Right ventricle myocardium superior (tissue), 1 donor: ENCODE measurements at regions of chr17 and their contacts with region 1.

Region 1: DNA sequence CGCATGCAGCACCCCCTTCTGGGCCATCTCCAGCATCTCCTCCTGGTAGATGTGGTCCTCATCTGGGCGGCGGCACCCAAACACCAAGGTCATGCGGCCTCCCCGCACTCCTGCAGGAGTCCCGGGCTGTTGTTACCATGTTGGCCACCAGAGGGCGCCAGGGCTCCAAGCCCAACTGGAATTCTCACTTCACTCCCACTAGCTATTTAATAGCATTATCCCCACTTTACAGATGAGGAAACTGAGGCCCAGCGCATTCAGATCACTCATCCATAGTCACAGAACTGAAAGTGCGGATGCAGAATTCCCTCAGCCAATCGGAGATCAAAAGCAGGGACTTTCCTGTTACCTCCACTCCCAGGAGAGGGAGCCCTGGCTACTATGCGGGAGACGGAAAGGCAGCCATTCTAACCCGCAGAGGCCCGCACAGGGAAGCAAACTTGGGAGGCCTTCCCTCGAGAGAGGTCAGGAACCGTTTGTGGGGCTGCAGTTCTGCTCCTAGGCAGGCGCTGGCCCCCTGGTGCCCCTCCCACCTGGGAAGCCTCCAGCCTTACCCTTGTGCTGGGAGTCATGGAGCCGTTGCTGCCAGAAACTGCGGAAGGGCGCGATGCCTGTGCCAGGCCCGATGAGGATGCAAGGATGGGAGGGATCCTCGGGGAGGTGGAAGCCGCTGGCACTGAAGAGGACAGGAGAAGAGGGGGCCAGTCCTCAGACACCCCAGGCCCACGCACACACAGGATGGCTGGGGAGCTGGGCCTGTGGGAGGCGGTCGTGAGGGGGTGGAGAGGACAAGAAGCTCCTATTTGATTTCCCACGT is 40.1 kb downstream of the NOS2 start:
- DNase-seq: peak; percentile 84
- ATAC-seq: peak; percentile 65

Region 2: DNA sequence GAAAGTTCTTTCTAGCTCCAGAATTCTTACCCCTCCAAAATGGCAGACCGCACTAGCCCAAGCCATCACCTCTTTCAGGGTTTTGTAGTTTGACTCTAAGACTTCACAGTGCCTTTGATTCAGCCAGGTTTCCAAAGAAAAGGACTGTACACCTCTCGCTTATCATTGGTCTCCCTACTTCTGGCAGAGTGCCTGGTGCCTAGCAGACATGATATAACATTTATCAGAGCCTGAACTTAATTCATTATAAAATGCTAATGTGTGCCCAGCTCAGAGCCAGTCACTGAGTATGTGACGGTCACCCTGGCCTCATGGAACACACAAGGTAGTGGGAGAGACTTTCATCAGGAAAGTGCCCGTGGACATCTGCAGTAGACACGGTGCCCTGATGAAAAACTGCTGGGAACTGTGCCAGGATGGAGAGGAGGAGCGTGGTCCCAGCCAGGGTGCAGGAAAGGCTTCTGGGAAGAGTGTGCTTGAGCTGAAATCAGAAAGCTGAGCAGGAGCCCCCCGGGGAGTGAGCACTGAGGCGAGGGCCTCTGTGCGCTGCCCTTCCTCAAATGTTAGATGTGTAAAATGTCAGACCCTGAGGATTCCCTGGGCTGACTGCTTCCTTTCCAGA is 163.6 kb before region 1 on chr17:
- intact Hi-C with region 1: no loop called
- DNase-seq: no peak
- ATAC-seq: no peak

Region 3: DNA sequence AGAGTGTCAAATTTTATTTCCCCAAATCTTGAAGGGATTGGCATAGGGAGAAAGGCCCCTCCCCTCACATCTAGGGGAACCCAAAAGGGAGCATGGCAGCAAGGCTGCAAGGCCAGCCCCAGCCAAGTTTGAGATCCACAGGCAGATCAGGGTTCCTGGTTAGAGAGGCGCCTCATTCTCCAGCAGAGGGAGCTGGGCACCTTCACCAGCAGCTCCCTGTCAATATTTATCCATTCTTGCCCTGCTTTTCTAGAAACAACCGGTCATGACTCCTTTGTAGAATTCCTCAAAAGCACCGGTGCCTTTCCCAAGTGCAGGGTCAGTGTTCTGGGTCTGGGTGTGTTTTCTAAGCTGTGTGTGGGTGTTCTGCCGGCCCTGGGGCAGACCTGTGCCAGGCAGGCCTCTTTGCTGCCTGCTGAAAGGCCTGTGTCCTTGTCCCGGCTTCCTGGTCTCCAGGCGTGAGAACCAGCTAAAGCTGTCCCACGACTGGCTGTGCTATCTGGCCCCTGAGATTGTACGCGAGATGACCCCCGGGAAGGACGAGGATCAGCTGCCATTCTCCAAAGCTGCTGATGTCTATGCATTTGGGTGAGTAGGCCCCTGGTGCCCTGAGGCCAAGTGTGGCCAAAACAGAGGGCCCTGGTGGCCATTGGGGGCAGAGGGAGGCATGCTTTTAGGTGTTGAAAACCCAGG is 150.5 kb before region 1 on chr17:
- intact Hi-C with region 1: loop called (anchors 5 kb)
- DNase-seq: peak; percentile 63
- ATAC-seq: peak; percentile 83

Region 4: GRCh38 chr17:27654654-27655524 is 105.4 kb before region 1 on chr17:
- intact Hi-C with region 1: loop called (anchors 10 kb)
- DNase-seq: peak; percentile 81
- ATAC-seq: peak; percentile 44

Region 5: DNA sequence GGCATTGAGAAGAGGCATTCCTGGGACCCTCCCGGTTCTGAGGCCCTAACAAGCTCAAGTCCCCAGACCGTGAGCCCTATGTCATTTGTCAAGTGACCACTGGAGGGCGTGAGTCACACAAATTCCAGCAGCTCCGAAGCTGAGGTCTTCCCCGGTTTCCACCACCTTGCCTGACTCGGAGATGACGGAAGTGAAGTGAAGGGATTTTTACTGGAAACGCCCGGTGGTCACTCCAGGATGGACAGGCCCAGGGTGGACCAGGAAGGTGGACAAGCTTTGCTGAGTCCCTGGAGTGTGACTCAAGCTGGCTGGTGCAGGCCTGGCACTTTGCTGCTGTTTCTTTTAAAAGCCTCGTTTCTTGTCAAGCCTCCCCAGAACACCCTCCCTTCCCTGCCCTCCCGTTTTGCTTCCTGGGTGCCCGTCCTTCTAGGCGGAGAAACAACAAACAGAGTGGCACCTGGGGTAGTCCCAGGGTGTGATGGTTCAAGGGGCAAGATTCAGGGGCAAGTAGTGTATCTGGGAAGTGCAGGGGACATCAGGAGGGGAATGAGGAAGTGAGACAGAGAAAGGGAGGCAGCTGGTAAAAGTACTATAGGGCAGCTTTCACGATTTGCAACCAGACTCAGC is 45.4 kb after region 1 on chr17:
- intact Hi-C with region 1: loop called (anchors 10 kb)
- DNase-seq: peak; percentile 81
- ATAC-seq: peak; percentile 96

Region 6: GRCh38 chr17:27879987-27880608 is 119.8 kb after region 1 on chr17:
- intact Hi-C with region 1: loop called (anchors 5 kb)
- DNase-seq: peak; percentile 79
- ATAC-seq: peak; percentile 97